Sciatic nerve (tissue), 2 donors: ENCODE measurements at regions of chr2 and their contacts with region 1.

Region 1: DNA sequence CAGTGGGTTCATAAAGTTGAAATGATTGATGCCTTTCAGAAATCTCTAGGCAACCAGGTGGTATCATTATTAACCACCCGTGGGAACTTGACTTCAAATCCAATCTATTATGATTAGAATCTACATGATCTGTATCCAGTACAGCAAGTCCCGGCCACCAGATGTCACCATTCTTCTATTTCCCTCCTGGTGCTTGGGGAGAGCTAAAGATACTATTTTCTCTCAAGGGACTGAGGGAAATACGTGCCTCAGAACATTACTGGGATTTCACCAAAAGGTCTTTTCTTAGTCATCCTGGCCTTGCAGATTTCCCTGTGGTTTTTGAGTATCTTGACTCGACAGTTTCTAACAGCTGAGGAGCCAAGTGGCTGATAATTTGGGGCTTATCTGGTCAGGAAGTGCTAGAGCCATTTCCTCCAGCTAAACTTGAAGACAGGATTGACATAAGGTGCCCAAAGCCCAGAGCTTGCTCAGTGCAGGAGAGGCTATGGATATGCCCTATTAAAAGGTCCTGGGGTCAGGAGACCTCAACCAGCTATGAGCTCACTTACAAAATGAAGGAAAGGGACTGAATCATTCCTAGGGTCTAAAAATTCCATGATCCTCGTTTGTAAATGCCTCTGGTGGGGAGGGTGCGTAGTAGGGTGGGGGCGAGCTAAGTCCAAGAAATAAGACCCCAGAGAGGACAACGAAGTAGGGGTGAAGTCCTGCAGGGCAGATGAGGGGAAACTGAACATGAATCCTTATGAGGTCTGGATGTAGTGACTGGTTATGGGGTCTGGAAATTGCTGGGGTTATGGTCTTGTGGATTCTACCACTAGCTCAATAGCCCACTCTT is 135.4 kb upstream of the MGAT5 start:
- DNase-seq: peak; percentile 94
- ATAC-seq: peak; percentile 86

Region 2: GRCh38 chr2:134420259-134420658 is 301.8 kb after region 1 on chr2:
- intact Hi-C with region 1: loop called (anchors 10 kb)
- DNase-seq: no peak
- ATAC-seq: peak; percentile 64

Region 3: DNA sequence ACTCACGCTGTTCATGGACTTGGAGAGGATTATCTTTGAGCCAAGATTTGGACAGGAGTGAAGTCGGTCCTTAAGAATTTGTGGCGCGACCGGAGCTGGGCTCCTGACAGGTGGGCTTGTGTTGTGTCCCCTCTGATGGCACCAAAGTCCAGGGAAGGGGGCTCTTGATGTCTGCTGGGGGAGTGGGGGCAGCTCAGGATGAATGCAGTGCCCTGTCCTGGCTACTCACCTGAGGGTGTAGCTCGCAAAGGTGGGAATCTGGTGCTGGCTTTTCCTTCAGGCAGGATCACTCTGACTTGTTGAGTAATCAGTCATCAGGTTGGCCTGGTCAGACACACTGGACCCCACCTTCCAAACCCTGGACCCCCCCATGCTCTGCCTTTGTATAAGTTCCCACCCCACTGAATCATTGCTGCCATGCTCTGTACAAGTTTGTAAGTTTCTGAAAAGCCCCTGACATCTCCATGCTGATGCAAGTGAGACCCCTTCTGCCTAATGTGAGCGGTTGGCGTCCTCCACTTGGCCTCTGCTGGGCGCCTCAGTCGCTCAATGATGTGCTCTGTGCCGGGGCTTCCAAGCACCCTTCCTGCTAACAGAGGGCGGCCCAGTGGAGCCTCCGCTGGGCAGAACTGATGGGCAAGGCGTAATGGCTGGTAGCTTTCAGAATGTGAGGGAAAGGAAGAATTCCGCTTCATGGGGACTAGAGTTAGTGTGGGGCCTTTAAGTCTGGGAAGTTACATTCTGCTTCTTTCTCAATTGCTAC is 331.4 kb after region 1 on chr2:
- intact Hi-C with region 1: loop called (anchors 1 kb)
- DNase-seq: peak; percentile 45
- ATAC-seq: no peak